CD4-positive, alpha-beta memory T cell (primary cell): ENCODE measurements at regions of chr17 and their contacts with region 1.

Region 1: DNA sequence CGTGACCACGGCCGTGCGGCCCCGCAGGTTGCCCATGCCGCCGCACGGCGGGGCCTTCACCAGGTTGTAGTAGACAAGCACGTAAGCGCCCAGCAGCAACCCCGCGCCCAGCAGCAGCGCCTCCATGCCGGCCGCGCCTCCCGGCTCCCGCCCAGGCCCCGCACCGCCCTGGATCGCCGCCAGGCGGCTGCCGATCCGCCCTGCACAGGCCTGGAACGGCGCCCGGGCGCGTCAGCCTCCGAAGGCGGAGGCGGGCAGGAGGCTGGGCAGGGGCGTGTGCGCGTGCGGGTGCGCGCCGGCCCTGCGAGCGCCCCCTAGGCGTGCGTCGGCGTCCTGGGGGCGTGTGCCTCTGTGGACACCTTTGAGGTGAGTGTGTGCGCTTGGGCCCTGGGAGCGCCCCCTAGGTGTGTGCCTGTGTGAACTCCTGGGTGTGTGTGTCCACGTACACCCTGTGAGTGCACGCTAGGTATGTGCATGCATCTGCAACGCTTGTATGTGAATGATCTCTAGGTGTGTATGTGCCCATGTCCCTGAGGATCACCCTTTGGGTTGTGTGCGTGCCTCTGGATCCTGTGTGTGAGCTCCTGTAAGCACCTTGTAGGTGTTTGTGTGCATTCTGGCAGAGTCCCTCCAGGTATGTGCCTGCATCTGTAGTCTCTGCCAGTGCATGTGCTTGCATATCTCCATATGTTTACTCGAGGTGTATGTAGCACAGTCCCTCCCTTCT is at the start of gene DHRS13:
- DNase-seq: peak; percentile 93 to 98 (median 96)
- H3K4me3 ChIP-seq: peak within 1 kb of the TSS; percentile 77 to 95
- H3K4me3 Mint-ChIP-seq: peak within 1 kb of the TSS; percentile 83 to 97 (median 90)
- H3K27ac ChIP-seq: peak within 1 kb of the TSS; percentile 76
- H3K27ac Mint-ChIP-seq: peak within 1 kb of the TSS; percentile 89 to 97 (median 93)
- H3K4me1 ChIP-seq: peaks cover 35% of the 10 kb centered on the region
- H3K4me1 Mint-ChIP-seq: peaks cover 31 to 50% (median 37%) of the 10 kb centered on the region in 4 donors
- H3K27me3 ChIP-seq: no peaks in the 10 kb centered on the region
- H3K27me3 Mint-ChIP-seq: no peaks in the 10 kb centered on the region
- total RNA-seq, gene DHRS13: 44.6 to 49.6 TPM

Region 2: GRCh38 chr17:28842282-28843012 is 60.5 kb before region 1 on chr17 and contains the start of gene FAM222B:
- CTCF ChIA-PET with region 1: interaction called, 11 read pairs
- POLR2A ChIA-PET with region 1: interaction called, 13 read pairs
- intact Hi-C with region 1: loop called (anchors 1 kb)
- DNase-seq: peak; percentile 85 to 87 (median 87)
- H3K4me3 ChIP-seq: peak within 1 kb of the TSS; percentile 55 to 87
- H3K4me3 Mint-ChIP-seq: peak within 1 kb of the TSS; percentile 93 to 100 (median 98)
- H3K27ac ChIP-seq: peak within 1 kb of the TSS; percentile 84
- H3K27ac Mint-ChIP-seq: peak within 1 kb of the TSS; percentile 93 to 99 (median 98)
- H3K4me1 ChIP-seq: peaks cover 25% of the 10 kb centered on the region
- H3K4me1 Mint-ChIP-seq: peaks cover 15 to 26% (median 21%) of the 10 kb centered on the region in 4 donors
- H3K27me3 ChIP-seq: no peaks in the 10 kb centered on the region
- H3K27me3 Mint-ChIP-seq: no peaks in the 10 kb centered on the region
- total RNA-seq, gene FAM222B: 19.0 to 23.0 TPM

Region 3: DNA sequence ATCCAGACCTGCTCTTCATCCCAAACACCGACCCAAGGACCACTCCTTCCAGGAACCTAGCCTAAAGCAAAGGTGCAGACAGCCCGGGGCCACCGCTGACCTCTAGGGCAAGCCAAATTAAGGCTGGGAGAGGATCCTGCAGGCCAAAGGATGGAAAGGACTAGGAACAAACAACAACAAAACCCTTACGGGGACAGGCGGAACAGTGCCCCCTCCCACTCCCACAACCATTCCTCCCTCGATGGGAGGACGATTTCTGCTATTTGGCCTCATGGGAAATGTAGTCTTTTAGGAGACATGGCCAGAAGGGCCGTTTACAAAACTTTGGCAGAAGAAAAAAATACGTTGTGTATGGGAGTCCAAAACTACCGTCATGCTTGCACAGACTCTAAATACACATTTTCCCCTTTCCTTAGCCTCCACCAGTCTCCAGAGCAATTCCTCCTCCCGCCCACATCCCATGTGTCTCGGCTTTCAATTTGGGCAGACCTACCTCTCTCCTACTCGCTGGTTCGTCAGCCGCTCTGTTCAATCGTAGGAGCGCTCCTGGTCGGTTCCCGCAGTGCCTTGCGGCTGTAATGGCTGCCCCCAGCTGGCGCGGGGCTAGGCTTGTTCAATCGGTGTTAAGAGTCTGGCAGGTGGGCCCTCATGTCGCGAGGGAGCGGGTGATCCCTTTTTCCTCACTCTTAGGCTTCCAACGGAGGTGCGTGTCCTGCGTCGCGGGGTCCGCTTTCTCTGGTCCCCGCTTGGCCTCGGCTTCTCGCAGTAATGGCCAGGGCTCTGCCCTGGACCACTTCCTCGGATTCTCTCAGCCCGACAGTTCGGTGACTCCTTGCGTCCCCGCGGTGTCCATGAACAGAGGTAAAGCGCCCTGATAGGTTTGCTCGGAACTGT is 48.3 kb before region 1 on chr17 and contains the start of gene ERAL1:
- CTCF ChIA-PET with region 1: interaction called, 14 read pairs
- POLR2A ChIA-PET with region 1: interaction called, 11 read pairs
- intact Hi-C with region 1: loop called (anchors 1 kb)
- DNase-seq: peak; percentile 82 to 90 (median 85)
- H3K4me3 ChIP-seq: peak within 1 kb of the TSS; percentile 88 to 91
- H3K4me3 Mint-ChIP-seq: peak within 1 kb of the TSS; percentile 90 to 98 (median 95)
- H3K27ac ChIP-seq: peak within 1 kb of the TSS; percentile 73
- H3K27ac Mint-ChIP-seq: peak within 1 kb of the TSS; percentile 82 to 96 (median 94)
- H3K4me1 ChIP-seq: peaks cover 13% of the 10 kb centered on the region
- H3K4me1 Mint-ChIP-seq: peaks cover 4 to 19% (median 11%) of the 10 kb centered on the region in 4 donors
- H3K27me3 ChIP-seq: no peaks in the 10 kb centered on the region
- H3K27me3 Mint-ChIP-seq: no peaks in the 10 kb centered on the region
- total RNA-seq, gene ERAL1: 23.5 to 24.3 TPM

Region 4: DNA sequence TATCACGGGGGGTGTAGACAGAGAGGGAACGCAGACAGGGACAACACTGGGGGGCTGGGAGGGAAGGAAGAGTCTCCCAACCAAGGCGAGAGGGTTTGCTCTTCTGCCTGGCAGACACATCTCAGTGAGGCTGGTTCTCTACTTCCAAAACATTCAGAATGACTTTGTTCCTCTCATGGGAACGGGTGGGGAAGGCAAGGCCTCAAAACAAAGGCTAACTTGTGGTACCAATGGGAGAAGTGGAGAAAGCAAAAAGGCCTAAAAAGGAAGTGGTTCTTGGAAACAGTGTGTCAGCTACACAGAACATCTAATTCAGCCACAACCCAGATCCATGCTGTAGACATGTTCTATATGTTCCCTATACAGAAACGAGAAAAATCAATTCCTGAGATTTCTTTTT is 13.0 kb before region 1 on chr17:
- CTCF ChIA-PET with region 1: interaction called, 19 read pairs
- POLR2A ChIA-PET with region 1: interaction called, 45 read pairs
- intact Hi-C with region 1: no loop called
- DNase-seq: no peak
- H3K4me3 ChIP-seq: no peak overlapping the region
- H3K4me3 Mint-ChIP-seq: no peak overlapping the region
- H3K27ac ChIP-seq: no peak overlapping the region
- H3K27ac Mint-ChIP-seq: peak overlapping the region in 5 of 7 donors; percentile 17 to 62 (median 36)
- H3K4me1 ChIP-seq: peaks cover 42% of the 10 kb centered on the region
- H3K4me1 Mint-ChIP-seq: peaks cover 27 to 66% (median 43%) of the 10 kb centered on the region in 4 donors
- H3K27me3 ChIP-seq: no peaks in the 10 kb centered on the region
- H3K27me3 Mint-ChIP-seq: no peaks in the 10 kb centered on the region

Region 5: DNA sequence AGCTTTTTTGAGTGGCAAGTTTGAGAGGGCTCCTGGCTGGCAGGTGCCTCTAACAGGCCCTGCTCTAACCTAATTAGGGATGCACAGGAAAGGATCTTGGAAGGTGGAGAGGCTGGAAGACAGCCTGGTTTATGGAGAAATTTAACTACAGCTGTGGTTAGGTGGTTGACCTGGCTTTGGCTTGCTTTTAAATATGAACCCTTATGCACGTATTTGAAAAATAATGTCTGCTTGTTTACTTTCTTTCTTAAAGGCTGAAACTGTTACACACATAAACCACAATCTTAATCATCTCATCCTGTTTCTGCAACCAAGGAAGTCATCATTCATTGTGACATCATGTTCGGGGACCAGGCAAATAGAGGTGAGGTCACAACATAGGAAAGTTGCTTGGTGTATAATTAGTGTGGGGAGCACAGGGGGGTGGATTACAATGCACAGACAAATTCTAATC is 23.0 kb after region 1 on chr17:
- CTCF ChIA-PET with region 1: interaction called, 8 read pairs
- POLR2A ChIA-PET with region 1: interaction called, 13 read pairs
- intact Hi-C with region 1: loop called (anchors 1 kb)
- DNase-seq: peak; percentile 87 to 92 (median 89)
- H3K4me3 ChIP-seq: peak overlapping the region in 1 of 2 donors; percentile 15
- H3K4me3 Mint-ChIP-seq: peak overlapping the region; percentile 49 to 80 (median 60)
- H3K27ac ChIP-seq: peak overlapping the region; percentile 77
- H3K27ac Mint-ChIP-seq: peak overlapping the region; percentile 90 to 98 (median 96)
- H3K4me1 ChIP-seq: peaks cover 56% of the 10 kb centered on the region
- H3K4me1 Mint-ChIP-seq: peaks cover 49 to 79% (median 59%) of the 10 kb centered on the region in 4 donors
- H3K27me3 ChIP-seq: no peaks in the 10 kb centered on the region
- H3K27me3 Mint-ChIP-seq: no peaks in the 10 kb centered on the region

Region 6: GRCh38 chr17:29019475-29020181 is 116.6 kb after region 1 on chr17:
- CTCF ChIA-PET with region 1: no interaction called
- POLR2A ChIA-PET with region 1: no interaction called
- intact Hi-C with region 1: no loop called
- DNase-seq: no peak
- H3K4me3 ChIP-seq: no peak overlapping the region
- H3K4me3 Mint-ChIP-seq: peak overlapping the region in 2 of 8 donors; percentile 2 to 23
- H3K27ac ChIP-seq: no peak overlapping the region
- H3K27ac Mint-ChIP-seq: no peak overlapping the region
- H3K4me1 ChIP-seq: peaks cover 12% of the 10 kb centered on the region
- H3K4me1 Mint-ChIP-seq: peaks cover 0 to 8% (median 4%) of the 10 kb centered on the region in 4 donors
- H3K27me3 ChIP-seq: peaks cover 22% of the 10 kb centered on the region
- H3K27me3 Mint-ChIP-seq: peaks cover 36 to 72% of the 10 kb centered on the region in 2 donors